ENCODE measurements at regions of chr5 and their contacts with region 1.

Region 1: GRCh38 chr5:149141224-149141956 is at the start of gene ABLIM3:
- DNase-seq: peak; percentile 49 to 87 (median 68)
- ATAC-seq: peak; percentile 93
- H3K4me3 ChIP-seq: peak within 1 kb of the TSS; percentile 47 to 67
- H3K4me3 Mint-ChIP-seq: peak within 1 kb of the TSS; percentile 45
- H3K27ac ChIP-seq: no peak within 1 kb of the TSS
- H3K27ac Mint-ChIP-seq: no peak within 1 kb of the TSS
- H3K4me1 ChIP-seq: peaks cover 5% of the 10 kb centered on the region
- H3K4me1 Mint-ChIP-seq: peaks cover 2% of the 10 kb centered on the region
- H3K27me3 ChIP-seq: peaks cover 0 to 13% of the 10 kb centered on the region in 2 experiments
- H3K27me3 Mint-ChIP-seq: peaks cover 35% of the 10 kb centered on the region
- CTCF ChIP-seq: peak; percentile 80
- total RNA-seq, gene ABLIM3: not detected

Region 2: DNA sequence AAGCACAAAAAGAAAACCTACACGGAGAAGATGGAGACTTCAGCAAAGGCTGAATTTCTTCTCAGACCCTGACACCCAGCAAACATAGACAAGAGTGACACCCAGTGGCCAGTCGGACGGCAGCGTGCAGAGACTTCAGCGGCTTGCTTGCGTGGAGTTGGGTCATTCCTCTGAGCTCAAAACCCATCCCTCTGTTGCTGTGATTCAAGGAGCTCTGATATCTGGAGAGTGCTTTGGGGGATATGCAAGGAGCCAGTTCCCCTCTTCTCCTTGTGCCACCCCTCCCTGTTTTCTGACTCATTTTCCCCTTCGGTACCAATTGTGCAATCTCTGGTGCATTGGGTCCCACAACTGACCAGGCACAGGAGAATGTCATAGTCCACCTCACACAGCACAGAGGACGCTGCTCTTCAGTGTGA is 106.0 kb before region 1 on chr5:
- CTCF ChIA-PET with region 1: no interaction called
- POLR2A ChIA-PET with region 1: no interaction called
- intact Hi-C with region 1: no loop called
- DNase-seq: peak; percentile 51 to 80 (median 67)
- ATAC-seq: peak; percentile 52
- H3K4me3 ChIP-seq: no peak overlapping the region
- H3K4me3 Mint-ChIP-seq: no peak overlapping the region
- H3K27ac ChIP-seq: no peak overlapping the region
- H3K27ac Mint-ChIP-seq: no peak overlapping the region
- H3K4me1 ChIP-seq: no peaks in the 10 kb centered on the region
- H3K4me1 Mint-ChIP-seq: peaks cover 15% of the 10 kb centered on the region
- H3K27me3 ChIP-seq: no peaks in the 10 kb centered on the region
- H3K27me3 Mint-ChIP-seq: peaks cover 6% of the 10 kb centered on the region
- CTCF ChIP-seq: peak; percentile 70

Region 3: GRCh38 chr5:149240354-149240998 is 99.1 kb after region 1 on chr5:
- CTCF ChIA-PET with region 1: interaction called, 4 read pairs
- POLR2A ChIA-PET with region 1: no interaction called
- intact Hi-C with region 1: loop called in 1 of 2 experiments (anchors 1 kb)
- DNase-seq: peak; percentile 70 to 93 (median 80)
- ATAC-seq: peak; percentile 97
- H3K4me3 ChIP-seq: peak overlapping the region in 1 of 2 experiments; percentile 20
- H3K4me3 Mint-ChIP-seq: no peak overlapping the region
- H3K27ac ChIP-seq: peak overlapping the region; percentile 49 to 60
- H3K27ac Mint-ChIP-seq: peak overlapping the region; percentile 81
- H3K4me1 ChIP-seq: peaks cover 42% of the 10 kb centered on the region
- H3K4me1 Mint-ChIP-seq: peaks cover 13% of the 10 kb centered on the region
- H3K27me3 ChIP-seq: no peaks in the 10 kb centered on the region
- H3K27me3 Mint-ChIP-seq: peaks cover 12% of the 10 kb centered on the region
- CTCF ChIP-seq: no peak

Region 4: GRCh38 chr5:149260761-149261160 is 119.4 kb after region 1 on chr5:
- CTCF ChIA-PET with region 1: interaction called, 52 read pairs
- POLR2A ChIA-PET with region 1: no interaction called
- intact Hi-C with region 1: loop called (anchors 1 kb)
- DNase-seq: no peak
- ATAC-seq: no peak
- H3K4me3 ChIP-seq: no peak overlapping the region
- H3K4me3 Mint-ChIP-seq: no peak overlapping the region
- H3K27ac ChIP-seq: no peak overlapping the region
- H3K27ac Mint-ChIP-seq: no peak overlapping the region
- H3K4me1 ChIP-seq: peaks cover 6% of the 10 kb centered on the region
- H3K4me1 Mint-ChIP-seq: peaks cover 4% of the 10 kb centered on the region
- H3K27me3 ChIP-seq: no peaks in the 10 kb centered on the region
- H3K27me3 Mint-ChIP-seq: peaks cover 33% of the 10 kb centered on the region
- CTCF ChIP-seq: no peak

Region 5: DNA sequence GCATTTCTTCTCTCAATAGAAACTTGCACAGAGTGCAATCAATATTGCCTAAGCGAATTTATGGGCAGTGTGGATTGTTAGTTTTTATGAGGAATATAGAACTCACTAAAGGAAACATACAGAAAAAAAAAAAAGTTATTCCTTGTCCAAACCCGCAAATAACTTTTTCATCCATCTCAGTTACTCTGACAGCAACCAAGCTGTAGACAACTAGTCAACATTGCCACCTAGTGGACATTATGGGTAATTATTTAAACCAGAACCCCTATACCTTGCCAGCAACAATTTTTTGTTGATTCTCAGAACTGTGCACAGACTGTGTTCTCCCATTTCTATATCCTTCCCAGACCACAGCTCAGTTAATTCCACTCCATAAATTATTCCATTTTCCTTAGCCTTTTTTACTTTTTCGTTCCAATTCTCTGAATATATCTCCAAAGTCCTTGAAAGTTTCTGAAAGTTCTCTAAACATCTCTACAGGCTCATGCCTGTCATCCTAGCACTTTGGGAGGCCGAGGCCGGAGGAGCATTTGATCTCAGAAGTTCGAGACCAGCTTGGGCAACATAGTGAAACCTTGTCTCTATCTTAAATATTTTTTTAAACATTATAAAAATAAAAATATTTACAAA is 127.7 kb after region 1 on chr5:
- CTCF ChIA-PET with region 1: interaction called, 52 read pairs
- POLR2A ChIA-PET with region 1: no interaction called
- intact Hi-C with region 1: loop called (anchors 1 kb)
- DNase-seq: peak in 2 of 9 experiments; percentile 53 to 63
- ATAC-seq: peak; percentile 45
- H3K4me3 ChIP-seq: no peak overlapping the region
- H3K4me3 Mint-ChIP-seq: no peak overlapping the region
- H3K27ac ChIP-seq: no peak overlapping the region
- H3K27ac Mint-ChIP-seq: no peak overlapping the region
- H3K4me1 ChIP-seq: peaks cover 14% of the 10 kb centered on the region
- H3K4me1 Mint-ChIP-seq: peaks cover 15% of the 10 kb centered on the region
- H3K27me3 ChIP-seq: peaks cover 0 to 12% of the 10 kb centered on the region in 2 experiments
- H3K27me3 Mint-ChIP-seq: peaks cover 28% of the 10 kb centered on the region
- CTCF ChIP-seq: peak; percentile 74

Region 6: GRCh38 chr5:149298842-149299404 is 157.5 kb after region 1 on chr5:
- CTCF ChIA-PET with region 1: no interaction called
- POLR2A ChIA-PET with region 1: no interaction called
- intact Hi-C with region 1: no loop called
- DNase-seq: no peak
- ATAC-seq: no peak
- H3K4me3 ChIP-seq: no peak overlapping the region
- H3K4me3 Mint-ChIP-seq: no peak overlapping the region
- H3K27ac ChIP-seq: no peak overlapping the region
- H3K27ac Mint-ChIP-seq: no peak overlapping the region
- H3K4me1 ChIP-seq: peaks cover 52% of the 10 kb centered on the region
- H3K4me1 Mint-ChIP-seq: peaks cover 39% of the 10 kb centered on the region
- H3K27me3 ChIP-seq: peaks cover 0 to 2% of the 10 kb centered on the region in 2 experiments
- H3K27me3 Mint-ChIP-seq: peaks cover 2% of the 10 kb centered on the region
- CTCF ChIP-seq: no peak

Region 7: DNA sequence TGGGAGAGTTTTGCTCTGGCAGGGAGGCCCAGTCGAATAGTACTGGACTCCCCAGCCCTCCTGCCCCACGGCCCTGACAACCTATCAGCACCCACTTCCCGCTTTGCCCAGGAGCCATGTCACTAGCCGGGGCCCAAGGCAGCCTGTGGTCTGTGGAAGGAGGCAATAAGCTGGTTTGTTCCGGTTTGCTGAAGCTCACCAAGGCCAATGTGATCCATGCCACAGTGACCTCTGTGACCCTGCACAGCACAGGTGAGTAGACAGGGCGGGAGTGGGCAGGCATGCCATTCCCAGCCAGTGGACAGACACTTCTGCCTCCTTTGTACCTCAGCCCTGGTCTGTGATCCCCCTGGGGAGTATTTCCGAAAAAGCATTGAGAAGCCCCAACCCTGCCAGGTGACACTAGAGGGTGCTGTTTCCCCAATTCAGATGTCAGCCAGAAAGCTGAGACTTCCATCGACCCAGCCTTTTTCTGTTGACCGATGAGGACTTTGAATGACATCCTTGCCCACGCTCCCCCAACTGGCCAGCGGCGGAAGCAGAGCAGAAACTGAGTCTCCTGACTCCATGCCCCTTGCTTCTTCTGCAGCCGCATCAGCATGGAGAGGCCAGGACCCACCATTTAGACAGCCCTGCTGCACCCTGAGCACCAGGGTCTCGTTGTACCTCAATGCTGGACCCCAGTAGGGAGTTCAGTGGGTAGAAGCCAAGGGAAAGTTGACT is 226.0 kb after region 1 on chr5:
- CTCF ChIA-PET with region 1: interaction called, 9 read pairs
- POLR2A ChIA-PET with region 1: no interaction called
- intact Hi-C with region 1: loop called in 1 of 2 experiments (anchors 2 kb)
- DNase-seq: peak; percentile 31 to 70 (median 59)
- ATAC-seq: peak; percentile 67
- H3K4me3 ChIP-seq: no peak overlapping the region
- H3K4me3 Mint-ChIP-seq: no peak overlapping the region
- H3K27ac ChIP-seq: no peak overlapping the region
- H3K27ac Mint-ChIP-seq: peak overlapping the region; percentile 41
- H3K4me1 ChIP-seq: peaks cover 8% of the 10 kb centered on the region
- H3K4me1 Mint-ChIP-seq: peaks cover 24% of the 10 kb centered on the region
- H3K27me3 ChIP-seq: no peaks in the 10 kb centered on the region
- H3K27me3 Mint-ChIP-seq: no peaks in the 10 kb centered on the region
- CTCF ChIP-seq: peak; percentile 57

Region 8: DNA sequence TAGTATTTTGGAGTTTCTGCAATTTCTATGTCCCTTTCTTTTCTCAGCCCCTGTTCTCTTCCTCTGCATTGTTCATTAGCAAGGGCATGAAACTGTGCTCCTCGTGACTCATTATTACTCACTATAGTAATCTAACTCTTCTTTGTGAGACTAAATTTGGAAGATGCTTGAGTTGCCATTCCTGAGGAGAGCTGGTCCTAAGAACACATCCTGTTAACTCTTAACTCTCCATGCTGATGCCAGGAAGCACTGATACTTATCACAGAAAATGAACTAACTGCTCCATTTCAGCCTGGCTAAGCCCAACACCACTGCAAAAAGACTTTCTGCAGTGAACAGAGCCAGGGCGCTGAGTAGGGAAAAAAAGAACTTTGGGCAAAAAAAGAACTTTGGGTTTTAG is 420.5 kb after region 1 on chr5:
- CTCF ChIA-PET with region 1: interaction called, 14 read pairs
- POLR2A ChIA-PET with region 1: no interaction called
- intact Hi-C with region 1: loop called in 1 of 2 experiments (anchors 1 kb)
- DNase-seq: no peak
- ATAC-seq: no peak
- H3K4me3 ChIP-seq: no peak overlapping the region
- H3K4me3 Mint-ChIP-seq: no peak overlapping the region
- H3K27ac ChIP-seq: no peak overlapping the region
- H3K27ac Mint-ChIP-seq: no peak overlapping the region
- H3K4me1 ChIP-seq: peaks cover 4% of the 10 kb centered on the region
- H3K4me1 Mint-ChIP-seq: peaks cover 17% of the 10 kb centered on the region
- H3K27me3 ChIP-seq: no peaks in the 10 kb centered on the region
- H3K27me3 Mint-ChIP-seq: no peaks in the 10 kb centered on the region
- CTCF ChIP-seq: no peak

Measured in CD8-positive, alpha-beta T cell (primary cell).